ENCODE measurements at regions of chr19 and their contacts with region 1.

Region 1: GRCh38 chr19:39539519-39540332 is at the start of gene EID2:
- DNase-seq: peak; percentile 99
- total RNA-seq, gene EID2: 12.9 to 13.0 TPM

Region 2: DNA sequence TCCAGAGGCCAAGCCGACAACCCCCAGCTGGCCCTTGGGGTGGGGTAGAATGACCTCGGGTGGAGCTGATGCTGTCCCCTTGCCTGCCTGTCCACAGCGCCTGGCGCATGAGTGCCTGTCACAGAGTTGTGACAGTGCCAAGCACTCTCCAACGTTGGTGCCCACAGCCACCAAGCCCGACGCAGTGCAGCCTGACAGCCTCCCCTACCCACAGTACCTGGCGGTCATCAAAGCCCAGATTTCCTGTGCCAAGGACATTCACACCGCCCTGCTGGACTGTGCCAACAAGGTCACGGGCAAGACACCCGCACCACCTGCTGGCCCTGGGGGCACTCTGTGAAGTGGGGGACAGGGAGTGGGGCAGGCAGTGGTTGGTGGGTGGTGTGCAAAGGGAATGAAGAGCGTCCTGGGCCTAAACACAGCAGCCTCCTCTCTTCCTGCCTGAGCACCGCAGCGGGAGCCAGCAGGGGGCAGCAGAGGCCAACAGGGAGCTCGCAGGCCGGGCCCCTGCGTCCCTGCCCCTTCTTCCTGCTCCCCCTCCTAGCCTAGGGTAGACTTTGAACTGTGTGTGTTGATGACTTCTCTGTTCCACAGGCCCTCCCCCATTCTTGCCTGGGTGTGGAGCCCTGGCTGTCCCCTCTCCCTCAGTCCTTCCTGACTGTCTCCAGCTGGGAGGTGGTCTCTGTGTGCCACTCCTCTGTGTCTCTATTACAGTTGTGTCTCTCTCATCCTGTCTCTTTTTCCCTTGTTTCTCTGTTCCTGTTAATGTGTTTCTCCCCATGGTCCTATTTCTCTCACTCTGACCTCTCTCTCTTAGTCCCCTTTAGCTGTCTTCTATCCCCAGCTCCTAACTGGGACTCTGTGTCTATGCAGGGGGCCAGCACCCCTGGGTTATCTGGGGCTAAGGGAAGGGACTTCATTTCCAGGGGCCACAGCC is 142.1 kb before region 1 on chr19:
- intact Hi-C with region 1: loop called in 1 of 2 experiments (anchors 2 kb)
- DNase-seq: peak; percentile 98

Measured in posterior vena cava (tissue), 2 donors.